HEK293 (cell line): ENCODE measurements at regions of chr17 and their contacts with region 1.

Region 1: GRCh38 chr17:42120770-42121769 is at the start of gene KAT2A:
- H3K4me3 ChIP-seq: peak within 1 kb of the TSS; percentile 56
- H3K27ac ChIP-seq: peak within 1 kb of the TSS; percentile 18; the same call in 1 of the 2 replicates
- H3K4me1 ChIP-seq: peaks cover 4% of the 10 kb centered on the region; the same call in 1 of the 2 replicates
- CTCF ChIP-seq: no peak

Region 2: GRCh38 chr17:41966463-41967140 is 154.5 kb before region 1 on chr17 and contains the start of gene CNP:
- CTCF ChIA-PET with region 1: interaction called, 11 read pairs
- POLR2A ChIA-PET with region 1: interaction called, 11 read pairs
- H3K4me3 ChIP-seq: peak within 1 kb of the TSS; percentile 76
- H3K27ac ChIP-seq: peak within 1 kb of the TSS; percentile 89
- H3K4me1 ChIP-seq: 0 out of 2 replicates have a peak, but pooled peaks cover 4% of the 10 kb centered on the region
- CTCF ChIP-seq: no peak

Region 3: DNA sequence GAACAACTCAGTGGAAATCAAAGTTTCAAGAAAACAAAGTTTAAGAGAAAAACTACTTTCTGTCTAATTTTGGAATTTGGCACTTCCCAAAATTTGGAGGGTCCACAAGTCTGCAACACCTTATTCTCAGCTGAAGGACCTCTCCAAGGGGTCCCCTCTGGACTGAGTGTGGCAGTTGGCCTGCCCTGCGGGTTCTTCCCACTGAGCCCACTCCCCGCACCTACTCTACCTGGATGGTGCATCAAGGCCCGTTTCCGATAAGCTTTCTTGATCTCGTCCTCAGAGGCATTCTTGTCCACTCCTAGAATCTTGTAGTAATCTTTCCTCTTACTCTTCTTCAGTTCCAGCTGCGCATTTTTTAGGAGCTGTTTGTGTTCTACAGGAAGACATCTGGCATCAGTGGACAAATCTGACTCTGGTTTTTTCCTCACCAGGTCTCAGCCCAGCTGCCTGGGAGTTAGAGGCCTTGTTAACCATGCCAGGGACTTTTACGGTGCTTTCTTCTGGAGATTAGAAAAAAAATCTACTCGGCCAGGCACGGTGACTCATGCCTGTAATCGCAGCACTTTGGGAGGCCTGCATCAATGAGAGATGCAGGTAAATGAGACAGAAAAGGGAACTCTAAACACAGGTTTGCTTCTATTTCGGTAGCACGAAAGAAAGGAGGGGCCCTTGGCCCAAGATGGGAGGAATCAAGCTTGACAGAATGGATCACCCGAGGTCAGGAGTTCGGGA is 138.9 kb before region 1 on chr17:
- CTCF ChIA-PET with region 1: no interaction called
- POLR2A ChIA-PET with region 1: no interaction called
- H3K4me3 ChIP-seq: no peak overlapping the region
- H3K27ac ChIP-seq: no peak overlapping the region
- H3K4me1 ChIP-seq: no peaks in the 10 kb centered on the region
- CTCF ChIP-seq: no peak

Region 4: DNA sequence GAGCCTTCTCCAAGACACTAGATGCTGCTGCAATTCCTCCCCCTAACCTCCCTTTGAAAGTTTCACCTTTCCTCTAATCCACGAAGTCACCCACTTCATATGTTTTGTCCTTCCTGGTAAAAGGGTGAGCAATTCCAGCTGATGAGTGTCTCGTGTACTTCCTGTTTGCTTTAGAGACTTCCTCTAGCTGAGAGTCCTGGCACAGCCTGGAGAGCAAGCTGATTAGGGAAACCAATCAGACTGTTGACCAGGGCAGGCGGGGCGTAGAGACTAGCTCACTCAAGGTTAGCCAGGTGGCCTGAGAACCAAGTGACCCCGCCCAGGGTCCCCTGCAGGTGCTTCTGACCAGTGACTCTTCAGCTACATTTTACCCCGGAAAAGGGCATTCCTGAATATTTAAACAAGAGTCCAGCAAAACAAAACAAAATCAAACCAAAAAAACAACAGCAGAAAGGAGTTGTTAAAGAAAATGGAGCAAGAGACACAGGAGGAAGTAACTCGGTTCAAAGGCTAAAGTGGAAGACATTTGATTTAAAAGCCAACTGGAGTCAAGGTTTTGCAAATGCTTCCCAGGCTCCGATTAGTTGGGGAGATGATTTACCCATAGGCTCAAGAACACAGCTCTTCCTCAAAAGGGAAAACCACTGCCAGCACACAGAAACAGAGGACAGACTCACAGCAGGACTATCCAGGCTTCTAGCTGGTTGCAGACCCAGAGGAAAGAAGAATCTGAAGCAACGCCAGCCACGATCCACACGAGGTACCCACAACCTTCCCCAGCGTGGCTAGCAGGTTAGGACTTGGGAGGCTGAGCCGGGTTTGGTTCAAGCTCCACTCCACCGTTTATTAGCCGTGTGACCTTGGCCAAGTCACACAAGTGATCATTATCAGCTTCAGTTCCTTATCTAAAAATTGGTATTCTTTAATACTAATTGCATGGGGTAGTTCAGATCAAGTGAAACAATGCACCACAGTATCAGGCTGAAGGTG is 14.9 kb after region 1 on chr17:
- CTCF ChIA-PET with region 1: interaction called, 11 read pairs
- POLR2A ChIA-PET with region 1: interaction called, 8 read pairs
- H3K4me3 ChIP-seq: no peak overlapping the region
- H3K27ac ChIP-seq: no peak overlapping the region
- H3K4me1 ChIP-seq: peaks cover 28% of the 10 kb centered on the region
- CTCF ChIP-seq: no peak

Region 5: GRCh38 chr17:42183741-42184711 is 63.0 kb after region 1 on chr17:
- CTCF ChIA-PET with region 1: interaction called, 7 read pairs
- POLR2A ChIA-PET with region 1: interaction called, 22 read pairs
- H3K4me3 ChIP-seq: peak overlapping the region; percentile 38
- H3K27ac ChIP-seq: no peak overlapping the region; the same call in 1 of the 2 replicates
- H3K4me1 ChIP-seq: no peaks in the 10 kb centered on the region
- CTCF ChIP-seq: peak; percentile 50; the same call in 1 of the 2 replicates

Region 6: DNA sequence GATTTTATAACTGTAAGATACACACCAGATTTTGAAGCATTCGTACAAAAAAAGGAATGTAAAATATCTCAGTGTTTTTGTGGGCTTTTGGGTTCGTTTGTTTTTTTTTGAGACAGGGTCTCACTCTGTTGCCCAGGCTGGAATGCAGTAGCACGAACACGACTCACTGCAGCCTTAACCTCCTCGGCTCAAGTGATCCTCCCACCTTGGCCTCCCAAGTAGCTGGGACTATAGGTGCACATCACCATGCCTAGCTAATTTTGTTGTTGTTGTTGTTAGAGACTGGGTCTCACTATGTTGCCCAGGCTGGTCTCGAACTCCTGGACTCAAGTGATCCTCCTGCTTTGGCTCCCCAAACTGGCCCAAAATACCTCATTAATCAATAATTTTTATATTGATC is 139.2 kb after region 1 on chr17:
- CTCF ChIA-PET with region 1: no interaction called
- POLR2A ChIA-PET with region 1: interaction called, 17 read pairs
- H3K4me3 ChIP-seq: no peak overlapping the region
- H3K27ac ChIP-seq: no peak overlapping the region
- H3K4me1 ChIP-seq: peaks cover 19% of the 10 kb centered on the region
- CTCF ChIP-seq: no peak